Dorsolateral prefrontal cortex (tissue), 120 donors: ENCODE measurements at regions of chr7 and their contacts with region 1.

Region 1: DNA sequence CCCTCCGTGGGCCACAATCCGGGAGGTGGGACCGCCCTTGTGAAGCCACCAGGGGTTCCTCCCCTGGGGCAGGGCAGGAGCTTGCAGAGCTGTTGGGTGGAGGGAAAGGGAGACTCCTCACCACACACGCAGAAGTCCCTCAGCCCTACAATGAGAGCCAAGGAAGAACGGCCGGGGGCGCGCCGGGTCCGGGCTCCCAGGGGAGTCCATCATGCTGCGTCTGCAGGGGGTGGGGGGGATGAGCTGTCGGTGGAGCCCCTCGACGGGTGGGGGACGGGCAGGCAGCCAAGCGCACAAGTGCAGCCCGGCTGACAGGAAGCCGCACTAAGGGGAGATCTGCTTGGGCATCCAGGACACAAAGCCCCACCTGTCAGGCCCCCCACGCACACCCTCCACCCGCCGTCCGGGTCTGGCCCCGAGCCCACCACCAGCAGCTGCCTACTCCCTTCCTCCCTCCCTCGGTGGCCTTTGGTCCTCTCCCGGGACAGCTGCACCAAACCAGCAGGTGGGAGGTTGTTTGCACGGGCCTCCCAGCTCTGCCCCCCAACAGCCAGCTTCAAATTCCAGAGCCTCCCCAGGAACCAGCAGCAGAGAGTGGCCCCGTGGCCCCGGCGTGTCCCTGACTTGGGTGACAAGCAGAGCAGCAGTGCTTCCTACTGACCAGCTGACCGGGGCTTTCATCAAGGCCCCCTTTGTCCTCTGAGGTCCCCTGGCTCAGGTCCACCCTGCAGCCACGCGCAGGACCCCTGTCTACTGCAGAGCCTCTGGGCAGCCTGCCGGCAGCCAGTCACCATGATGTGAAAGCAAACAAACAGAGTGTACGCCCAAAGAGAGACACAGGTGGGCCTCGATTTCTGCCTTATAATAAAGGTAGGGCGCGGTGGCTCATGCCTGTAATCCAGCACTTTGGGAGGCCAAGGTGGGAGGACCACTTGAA is 50.3 kb downstream of the HIP1 start:
- DNase-seq: peak; percentile 33 to 96 (median 92)
- H3K4me3 ChIP-seq: peak overlapping the region in 54 of 59 donors; percentile 9 to 63 (median 36)
- H3K27ac ChIP-seq: peak overlapping the region; percentile 60 to 99 (median 93)
- H3K27me3 ChIP-seq: no peaks in the 10 kb centered on the region
- CTCF ChIP-seq: peak in 12 of 56 donors; percentile 7 to 33 (median 14)

Region 2: DNA sequence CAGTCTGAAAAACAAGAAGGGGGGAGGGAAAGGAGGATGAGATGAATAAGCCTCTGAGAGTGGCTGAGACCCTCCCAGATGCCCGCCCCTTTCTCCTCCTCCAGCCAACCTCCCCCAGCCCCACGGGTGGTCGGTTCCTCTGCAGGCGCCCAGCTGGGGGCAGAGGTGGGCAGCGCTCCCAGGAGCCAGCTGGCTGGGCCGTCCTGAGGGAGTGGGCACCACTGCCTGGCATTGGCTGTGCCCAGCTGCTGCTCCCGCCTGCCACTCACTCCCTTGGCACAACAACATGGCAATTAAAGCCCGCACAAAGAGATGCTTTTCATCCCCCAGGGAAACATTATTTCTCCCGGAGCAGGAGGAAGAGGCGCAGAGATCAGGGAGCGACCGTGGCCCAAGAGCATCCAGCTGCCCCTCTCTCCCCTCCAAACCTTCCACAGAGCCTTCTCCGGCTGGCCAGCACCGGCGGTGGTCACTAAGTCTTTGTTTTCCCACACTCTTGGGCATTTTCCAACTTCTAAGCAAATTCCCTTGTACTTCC is 89.2 kb before region 1 on chr7:
- intact Hi-C with region 1: loop called (anchors 1 to 2 kb)
- DNase-seq: peak; percentile 48 to 96 (median 94)
- H3K4me3 ChIP-seq: peak overlapping the region in 35 of 59 donors; percentile 3 to 53 (median 23)
- H3K27ac ChIP-seq: peak overlapping the region; percentile 72 to 98 (median 95)
- H3K27me3 ChIP-seq: no peaks in the 10 kb centered on the region
- CTCF ChIP-seq: peak in 27 of 56 donors; percentile 7 to 48 (median 23)

Region 3: DNA sequence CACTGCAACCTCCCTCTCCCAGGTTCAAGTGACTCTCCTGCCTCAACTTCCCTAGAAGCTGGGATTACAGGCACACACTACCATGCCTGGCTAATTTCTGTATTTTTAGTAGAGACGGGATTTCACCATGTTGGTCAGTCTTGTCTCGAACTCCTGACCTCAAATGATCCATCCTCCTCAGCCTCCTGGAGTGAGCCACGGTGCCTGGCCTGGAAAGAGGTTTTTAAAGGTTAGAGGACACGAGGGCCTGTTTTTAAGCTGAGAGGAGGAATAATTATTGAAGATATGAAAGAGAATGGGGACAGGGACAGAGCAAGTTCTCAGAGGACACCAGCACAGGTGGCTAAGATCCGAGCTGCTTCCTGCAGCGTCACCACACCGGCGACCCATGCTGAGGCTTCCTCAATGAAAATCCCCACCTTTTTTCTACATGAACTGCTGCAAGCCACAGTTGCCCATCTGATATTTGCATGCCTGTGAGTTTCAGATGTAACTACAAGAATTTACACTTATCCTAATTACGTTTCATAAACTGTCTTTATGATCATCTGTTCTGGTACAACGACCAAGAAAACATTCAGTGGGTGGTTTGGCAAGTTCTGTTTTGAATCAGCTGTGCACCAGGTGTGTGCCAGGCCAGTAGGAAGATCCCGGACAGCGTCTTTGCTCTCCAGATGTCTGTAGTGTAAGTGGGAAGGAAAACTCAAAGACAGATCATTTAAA is 25.7 kb before region 1 on chr7:
- intact Hi-C with region 1: loop called in 1 of 2 experiments (anchors 1 kb)
- DNase-seq: no peak
- H3K4me3 ChIP-seq: no peak overlapping the region
- H3K27ac ChIP-seq: peak overlapping the region in 58 of 59 donors; percentile 14 to 97 (median 89)
- H3K27me3 ChIP-seq: no peaks in the 10 kb centered on the region
- CTCF ChIP-seq: no peak